ENCODE measurements at regions of chr14 and their contacts with region 1.

Region 1: DNA sequence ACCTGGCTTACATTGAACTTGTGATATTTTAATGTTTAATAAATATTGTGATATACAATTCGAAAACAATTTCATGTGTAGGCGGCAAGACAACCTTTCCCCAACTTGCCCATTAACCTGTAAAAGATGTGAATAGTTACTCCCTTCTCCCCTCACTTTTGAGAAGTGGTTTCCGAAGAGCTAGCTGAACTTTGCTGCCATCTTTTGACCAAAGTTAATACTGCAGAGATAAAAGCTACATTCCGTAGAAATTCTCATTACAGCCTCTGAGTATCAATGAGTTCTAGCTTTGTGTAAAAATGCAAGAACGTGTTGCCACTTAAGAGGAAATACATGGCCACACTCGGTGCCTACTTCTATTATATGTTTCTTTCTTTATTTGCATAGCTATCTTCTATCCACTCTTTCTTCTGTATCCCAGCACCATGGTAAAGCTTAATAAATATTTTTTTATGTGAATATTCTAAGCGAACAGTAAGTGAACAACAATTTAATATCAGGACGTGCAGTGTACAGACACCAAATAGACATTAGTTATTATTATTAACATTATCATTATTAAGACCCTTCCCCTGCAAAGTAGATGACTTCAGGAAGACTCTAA is 105.1 kb upstream of the TMEM260 start:
- DNase-seq: no peak
- ATAC-seq: peak in 1 of 2 donors; percentile 39
- H3K4me3 ChIP-seq: no peak overlapping the region
- H3K27ac ChIP-seq: no peak overlapping the region
- H3K4me1 ChIP-seq: no peaks in the 10 kb centered on the region
- H3K27me3 ChIP-seq: no peaks in the 10 kb centered on the region
- CTCF ChIP-seq: peak; percentile 47 to 84 (median 63)
- POLR2A ChIP-seq: no peak

Region 2: DNA sequence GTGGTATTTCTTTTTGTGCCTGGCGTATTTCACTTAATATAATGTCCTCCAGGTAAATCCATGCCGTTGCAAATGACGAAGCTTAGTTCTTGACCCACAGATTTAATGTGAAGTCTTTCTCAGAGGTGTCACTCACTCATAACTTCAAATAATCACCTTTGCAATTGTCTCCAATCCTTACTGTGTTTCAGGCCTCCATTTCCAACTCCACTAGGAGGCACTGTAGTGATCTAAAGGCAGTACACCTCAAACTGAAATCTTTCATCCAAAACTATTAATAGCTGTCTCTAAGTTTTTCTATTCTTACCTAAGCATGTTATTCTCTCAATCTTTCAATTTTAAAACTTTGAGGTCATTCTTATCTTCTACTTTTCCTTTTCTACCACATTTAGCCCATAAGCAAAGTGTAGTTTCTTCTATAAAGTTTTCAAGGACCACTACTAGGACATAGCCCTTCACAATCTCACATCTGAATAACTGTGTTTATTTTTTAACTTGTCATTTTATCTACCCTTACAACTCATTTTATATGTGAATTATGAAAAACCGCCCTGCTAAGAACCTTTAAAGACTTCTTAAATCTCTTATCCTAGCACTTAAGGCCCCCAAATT is 1228.8 kb before region 1 on chr14:
- in situ Hi-C with region 1: loop called in 1 of 4 experiments (anchors 25 kb)
- intact Hi-C with region 1: no loop called
- DNase-seq: no peak
- ATAC-seq: no peak
- H3K4me3 ChIP-seq: no peak overlapping the region
- H3K27ac ChIP-seq: no peak overlapping the region
- H3K4me1 ChIP-seq: no peaks in the 10 kb centered on the region
- H3K27me3 ChIP-seq: peaks cover 0 to 9% (median 4%) of the 10 kb centered on the region in 3 donors
- CTCF ChIP-seq: peak in 4 of 5 experiments; percentile 17 to 46 (median 32)
- POLR2A ChIP-seq: no peak

Region 3: GRCh38 chr14:55438066-55438683 is 1036.3 kb before region 1 on chr14:
- in situ Hi-C with region 1: loop called (anchors 10 to 25 kb)
- intact Hi-C with region 1: loop called (anchors 2 kb)
- DNase-seq: no peak
- ATAC-seq: no peak
- H3K4me3 ChIP-seq: no peak overlapping the region
- H3K27ac ChIP-seq: no peak overlapping the region
- H3K4me1 ChIP-seq: no peaks in the 10 kb centered on the region
- H3K27me3 ChIP-seq: no peaks in the 10 kb centered on the region
- CTCF ChIP-seq: peak in 2 of 5 experiments; percentile 19 to 28
- POLR2A ChIP-seq: no peak

Region 4: GRCh38 chr14:55446218-55446654 is 1028.3 kb before region 1 on chr14:
- in situ Hi-C with region 1: loop called (anchors 10 to 25 kb)
- intact Hi-C with region 1: loop called (anchors 2 kb)
- DNase-seq: peak in 1 of 2 donors; percentile 14
- ATAC-seq: no peak
- H3K4me3 ChIP-seq: no peak overlapping the region
- H3K27ac ChIP-seq: no peak overlapping the region
- H3K4me1 ChIP-seq: peaks cover 0 to 5% of the 10 kb centered on the region in 2 donors
- H3K27me3 ChIP-seq: no peaks in the 10 kb centered on the region
- CTCF ChIP-seq: peak; percentile 13 to 70 (median 42)
- POLR2A ChIP-seq: no peak

Region 5: DNA sequence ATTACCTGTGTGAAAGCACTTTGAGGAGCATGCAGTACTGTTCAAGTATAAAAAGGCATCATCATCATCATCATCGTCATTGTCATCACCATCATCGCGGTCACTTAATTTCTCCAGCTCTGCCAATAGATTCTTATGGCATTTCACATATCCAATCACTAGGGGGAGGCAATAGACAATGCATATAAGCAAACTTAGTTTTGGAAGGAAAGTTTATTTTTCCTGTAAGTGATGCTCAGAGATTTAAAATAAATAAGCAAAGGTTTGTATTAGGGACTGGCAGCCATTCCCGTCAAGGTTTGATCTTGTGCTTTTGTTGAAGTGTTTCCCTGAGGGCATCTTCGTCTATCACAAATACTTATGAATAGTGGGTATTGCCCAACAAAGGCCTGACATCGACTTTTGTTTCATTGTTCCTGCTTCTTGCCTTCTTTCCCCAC is 767.1 kb before region 1 on chr14:
- in situ Hi-C with region 1: loop called in 3 of 4 experiments (anchors 10 to 25 kb)
- intact Hi-C with region 1: loop called (anchors 1 kb)
- DNase-seq: no peak
- ATAC-seq: peak; percentile 28 to 34
- H3K4me3 ChIP-seq: no peak overlapping the region
- H3K27ac ChIP-seq: no peak overlapping the region
- H3K4me1 ChIP-seq: peaks cover under 1 to 3% of the 10 kb centered on the region in 2 donors
- H3K27me3 ChIP-seq: no peaks in the 10 kb centered on the region
- CTCF ChIP-seq: peak; percentile 40 to 55 (median 53)
- POLR2A ChIP-seq: no peak

Region 6: GRCh38 chr14:55715889-55716288 is 758.6 kb before region 1 on chr14:
- in situ Hi-C with region 1: loop called in 3 of 4 experiments (anchors 10 to 25 kb)
- intact Hi-C with region 1: no loop called
- DNase-seq: peak; percentile 71 to 79
- ATAC-seq: peak; percentile 84 to 90
- H3K4me3 ChIP-seq: no peak overlapping the region
- H3K27ac ChIP-seq: peak overlapping the region in 3 of 4 donors; percentile 46 to 75 (median 74)
- H3K4me1 ChIP-seq: peaks cover 0 to 8% of the 10 kb centered on the region in 2 donors
- H3K27me3 ChIP-seq: no peaks in the 10 kb centered on the region
- CTCF ChIP-seq: no peak
- POLR2A ChIP-seq: no peak

Region 7: GRCh38 chr14:56659964-56660551 is 185.5 kb after region 1 on chr14:
- in situ Hi-C with region 1: no loop called
- intact Hi-C with region 1: no loop called
- DNase-seq: no peak
- ATAC-seq: no peak
- H3K4me3 ChIP-seq: no peak overlapping the region
- H3K27ac ChIP-seq: no peak overlapping the region
- H3K4me1 ChIP-seq: no peaks in the 10 kb centered on the region
- H3K27me3 ChIP-seq: no peaks in the 10 kb centered on the region
- CTCF ChIP-seq: peak in 3 of 5 experiments; percentile 25 to 45 (median 25)
- POLR2A ChIP-seq: no peak

Measured in gastrocnemius medialis (tissue), 4 donors.